HCT116 (cell line): ENCODE measurements at regions of chr14 and their contacts with region 1.

Region 1: DNA sequence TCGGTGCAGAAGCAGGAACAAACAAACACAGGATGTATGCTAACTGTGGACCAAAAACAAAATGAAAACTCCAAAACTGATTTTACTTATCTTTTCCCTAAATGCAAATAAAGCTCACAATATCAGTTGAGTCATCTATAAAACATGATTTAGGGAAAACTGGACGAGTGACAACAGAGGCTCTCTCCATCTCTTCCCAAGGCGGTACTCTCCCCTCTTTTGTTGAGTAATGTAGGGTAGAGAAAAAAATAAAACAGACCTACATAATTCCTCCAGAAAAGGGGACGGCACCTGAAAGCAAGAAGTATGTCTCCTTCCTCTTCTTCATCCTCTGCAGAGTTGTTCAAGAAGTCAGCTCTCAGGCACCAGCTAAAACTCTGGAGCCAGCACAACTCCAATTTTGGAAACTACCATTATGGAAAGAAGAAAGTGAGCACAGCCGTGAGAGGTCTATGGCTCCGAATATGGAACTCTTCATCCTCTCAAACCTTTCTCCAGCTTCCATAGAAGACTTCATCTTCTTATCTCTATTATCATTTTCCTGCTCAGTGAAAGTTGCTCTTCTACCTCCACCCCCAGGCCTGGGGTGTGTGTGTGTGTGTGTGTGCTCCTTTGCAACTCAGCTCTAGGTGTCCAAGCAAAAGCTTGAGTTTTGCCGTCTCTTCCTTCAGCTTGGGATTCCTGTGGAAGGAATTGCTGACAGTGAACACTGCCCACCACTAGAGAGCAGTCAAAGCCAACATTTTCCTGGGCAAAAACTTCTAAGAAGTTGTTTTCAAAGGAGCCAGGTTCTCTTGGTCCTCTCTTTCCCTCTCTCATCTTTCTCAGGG is 155.4 kb downstream of the DIO2 start:
- DNase-seq: no peak
- ATAC-seq: peak; percentile 40; the same call in 1 of the 2 replicates
- H3K4me3 ChIP-seq: no peak overlapping the region
- H3K27ac ChIP-seq: no peak overlapping the region
- H3K4me1 ChIP-seq: no peaks in the 10 kb centered on the region
- H3K27me3 ChIP-seq: no peaks in the 10 kb centered on the region
- CTCF ChIP-seq: peak; percentile 18 to 50 (median 50); a peak in 4 of 6 replicates
- POLR2A ChIP-seq: no peak
- RAD21 ChIP-seq: peak; percentile 49

Region 2: DNA sequence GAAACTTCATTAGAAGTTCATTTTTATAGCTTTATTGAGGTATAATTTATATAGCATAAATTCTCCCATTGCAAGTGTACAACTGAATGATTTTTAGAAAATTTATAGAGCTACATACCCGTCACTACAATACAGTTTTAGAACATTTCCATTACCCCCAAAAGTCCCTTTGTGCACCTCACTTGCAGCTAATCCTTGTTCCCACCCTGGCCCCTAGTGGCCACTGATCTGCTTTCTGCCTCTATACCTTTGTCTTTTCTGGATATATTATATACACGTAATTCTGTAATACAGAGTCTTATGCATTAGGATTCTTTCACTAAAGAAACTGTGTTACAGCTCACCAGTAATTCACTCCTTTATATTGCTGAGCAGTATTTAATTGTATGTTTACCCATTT is 300.5 kb after region 1 on chr14:
- CTCF ChIA-PET with region 1: no interaction called
- POLR2A ChIA-PET with region 1: no interaction called
- RAD21 ChIA-PET with region 1: no interaction called
- intact Hi-C with region 1: loop called (anchors 10 kb)
- DNase-seq: no peak
- ATAC-seq: peak; percentile 78
- H3K4me3 ChIP-seq: no peak overlapping the region
- H3K27ac ChIP-seq: no peak overlapping the region
- H3K4me1 ChIP-seq: no peaks in the 10 kb centered on the region
- H3K27me3 ChIP-seq: no peaks in the 10 kb centered on the region
- CTCF ChIP-seq: peak in 2 of 3 experiments; percentile 46 to 47; a peak in 4 of 6 replicates
- POLR2A ChIP-seq: no peak
- RAD21 ChIP-seq: peak; percentile 31